Natural killer cell (primary cell): ENCODE measurements at regions of chr7 and their contacts with region 1.

Region 1: DNA sequence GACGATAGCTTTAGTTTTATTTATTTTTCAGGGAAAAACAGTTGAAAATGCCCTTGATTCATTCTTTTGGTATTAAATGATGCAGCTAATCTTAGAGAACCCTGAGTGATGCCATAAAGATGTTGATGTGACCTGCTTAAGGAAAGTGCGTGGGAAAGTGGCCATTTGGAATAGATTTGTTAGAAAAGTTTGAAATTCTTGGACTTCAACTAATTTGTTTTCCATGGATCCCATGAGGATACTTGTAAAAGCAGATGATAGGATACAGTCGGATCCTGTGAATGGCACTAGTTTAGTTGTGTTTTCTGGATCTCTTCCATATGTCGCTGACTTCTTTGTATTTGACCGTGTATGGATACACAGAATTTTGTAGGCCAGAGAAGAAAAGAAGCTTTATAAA is 69.0 kb downstream of the SEPTIN7 start:
- DNase-seq: no peak
- ATAC-seq: no peak
- H3K4me3 ChIP-seq: no peak overlapping the region
- H3K4me3 Mint-ChIP-seq: no peak overlapping the region
- H3K27ac ChIP-seq: no peak overlapping the region
- H3K27ac Mint-ChIP-seq: peak overlapping the region; percentile 5 to 50
- H3K4me1 ChIP-seq: no peaks in the 10 kb centered on the region
- H3K4me1 Mint-ChIP-seq: peaks cover 40 to 66% of the 10 kb centered on the region in 2 donors
- H3K27me3 ChIP-seq: no peaks in the 10 kb centered on the region
- H3K27me3 Mint-ChIP-seq: no peaks in the 10 kb centered on the region
- CTCF ChIP-seq: no peak

Region 2: GRCh38 chr7:35831208-35831607 is 38.6 kb before region 1 on chr7:
- intact Hi-C with region 1: loop called (anchors 5 kb)
- DNase-seq: no peak
- ATAC-seq: no peak
- H3K4me3 ChIP-seq: no peak overlapping the region
- H3K4me3 Mint-ChIP-seq: no peak overlapping the region
- H3K27ac ChIP-seq: no peak overlapping the region
- H3K27ac Mint-ChIP-seq: peak overlapping the region; percentile 39 to 65
- H3K4me1 ChIP-seq: peaks cover 10% of the 10 kb centered on the region
- H3K4me1 Mint-ChIP-seq: peaks cover 67 to 75% of the 10 kb centered on the region in 2 donors
- H3K27me3 ChIP-seq: no peaks in the 10 kb centered on the region
- H3K27me3 Mint-ChIP-seq: no peaks in the 10 kb centered on the region
- CTCF ChIP-seq: no peak